ENCODE measurements at regions of chr22 and their contacts with region 1.

Region 1: GRCh38 chr22:41946629-41947423 is at the start of gene CENPM:
- DNase-seq: peak; percentile 90 to 94 (median 92)
- ATAC-seq: peak; percentile 98
- H3K4me3 ChIP-seq: peak within 1 kb of the TSS; percentile 24 to 34
- H3K27ac ChIP-seq: peak within 1 kb of the TSS in 3 of 4 donors; percentile 45 to 58 (median 51)
- H3K4me1 ChIP-seq: peaks cover 15% of the 10 kb centered on the region
- H3K27me3 ChIP-seq: no peaks in the 10 kb centered on the region
- CTCF ChIP-seq: peak in 4 of 7 experiments; percentile 7 to 29 (median 14)
- POLR2A ChIP-seq: no peak
- total RNA-seq, gene CENPM: not detected

Region 2: GRCh38 chr22:41699264-41700014 is 247.4 kb before region 1 on chr22 and contains the start of gene MEI1:
- intact Hi-C with region 1: loop called (anchors 10 kb)
- DNase-seq: peak; percentile 86 to 92 (median 89)
- ATAC-seq: peak; percentile 78
- H3K4me3 ChIP-seq: no peak within 1 kb of the TSS
- H3K27ac ChIP-seq: no peak within 1 kb of the TSS
- H3K4me1 ChIP-seq: peaks cover 16% of the 10 kb centered on the region
- H3K27me3 ChIP-seq: no peaks in the 10 kb centered on the region
- CTCF ChIP-seq: no peak
- POLR2A ChIP-seq: no peak
- total RNA-seq, gene MEI1: not detected